ENCODE measurements at regions of chr20 and their contacts with region 1.

Region 1: GRCh38 chr20:45971675-45972499 is at the start of gene ZNF335:
- DNase-seq: peak; percentile 86
- ATAC-seq: peak; percentile 78
- H3K4me3 ChIP-seq: peak within 1 kb of the TSS; percentile 81
- H3K27ac ChIP-seq: peak within 1 kb of the TSS; percentile 97
- H3K4me1 ChIP-seq: peaks cover 5% of the 10 kb centered on the region
- H3K27me3 ChIP-seq: no peaks in the 10 kb centered on the region
- CTCF ChIP-seq: peak in 1 of 3 experiments; percentile 27; a peak in 1 of 6 replicates
- EP300 ChIP-seq: peak; percentile 13 to 58; a peak in 3 of 4 replicates
- POLR2A ChIP-seq: peak; percentile 88
- RAD21 ChIP-seq: no peak
- polyA plus RNA-seq, gene ZNF335: 0.74 to 1.2 TPM

Region 2: GRCh38 chr20:45798935-45799642 is 172.8 kb before region 1 on chr20:
- CTCF ChIA-PET with region 1: interaction called, 120 read pairs
- POLR2A ChIA-PET with region 1: interaction called, 5 read pairs
- RAD21 ChIA-PET with region 1: interaction called, 21 read pairs
- SMC1A ChIA-PET with region 1: interaction called, 17 read pairs
- in situ Hi-C with region 1: no loop called
- intact Hi-C with region 1: no loop called
- DNase-seq: no peak
- ATAC-seq: peak; percentile 99
- H3K4me3 ChIP-seq: no peak overlapping the region
- H3K27ac ChIP-seq: no peak overlapping the region
- H3K4me1 ChIP-seq: no peaks in the 10 kb centered on the region
- H3K27me3 ChIP-seq: no peaks in the 10 kb centered on the region
- CTCF ChIP-seq: peak; percentile 69 to 78 (median 73)
- EP300 ChIP-seq: no peak
- POLR2A ChIP-seq: no peak
- RAD21 ChIP-seq: peak; percentile 66

Region 3: GRCh38 chr20:45842169-45842812 is 129.6 kb before region 1 on chr20:
- CTCF ChIA-PET with region 1: interaction called, 18 read pairs
- POLR2A ChIA-PET with region 1: no interaction called
- RAD21 ChIA-PET with region 1: interaction called, 3 read pairs
- SMC1A ChIA-PET with region 1: no interaction called
- in situ Hi-C with region 1: no loop called
- intact Hi-C with region 1: no loop called
- DNase-seq: peak; percentile 33
- ATAC-seq: peak; percentile 98
- H3K4me3 ChIP-seq: no peak overlapping the region
- H3K27ac ChIP-seq: peak overlapping the region; percentile 63
- H3K4me1 ChIP-seq: peaks cover 14% of the 10 kb centered on the region
- H3K27me3 ChIP-seq: no peaks in the 10 kb centered on the region
- CTCF ChIP-seq: no peak
- EP300 ChIP-seq: no peak
- POLR2A ChIP-seq: no peak
- RAD21 ChIP-seq: no peak

Region 4: GRCh38 chr20:45910670-45911485 is 61.0 kb before region 1 on chr20:
- CTCF ChIA-PET with region 1: interaction called, 19 read pairs
- POLR2A ChIA-PET with region 1: interaction called, 3 read pairs
- RAD21 ChIA-PET with region 1: interaction called, 3 read pairs
- SMC1A ChIA-PET with region 1: interaction called, 8 read pairs
- in situ Hi-C with region 1: no loop called
- intact Hi-C with region 1: no loop called
- DNase-seq: peak; percentile 99
- ATAC-seq: peak; percentile 96
- H3K4me3 ChIP-seq: peak overlapping the region; percentile 77
- H3K27ac ChIP-seq: peak overlapping the region; percentile 61; the same call in 1 of the 2 replicates
- H3K4me1 ChIP-seq: peaks cover 15% of the 10 kb centered on the region
- H3K27me3 ChIP-seq: no peaks in the 10 kb centered on the region
- CTCF ChIP-seq: no peak
- EP300 ChIP-seq: no peak
- POLR2A ChIP-seq: peak; percentile 77
- RAD21 ChIP-seq: no peak

Region 5: GRCh38 chr20:45946149-45946970 is 25.5 kb before region 1 on chr20:
- CTCF ChIA-PET with region 1: interaction called, 33 read pairs
- POLR2A ChIA-PET with region 1: interaction called, 3 read pairs
- RAD21 ChIA-PET with region 1: interaction called, 3 read pairs
- SMC1A ChIA-PET with region 1: interaction called, 7 read pairs
- in situ Hi-C with region 1: no loop called
- intact Hi-C with region 1: no loop called
- DNase-seq: no peak
- ATAC-seq: peak; percentile 7; the same call in 2 of the 3 replicates
- H3K4me3 ChIP-seq: no peak overlapping the region
- H3K27ac ChIP-seq: no peak overlapping the region
- H3K4me1 ChIP-seq: peaks cover 3% of the 10 kb centered on the region; the same call in 1 of the 2 replicates
- H3K27me3 ChIP-seq: no peaks in the 10 kb centered on the region
- CTCF ChIP-seq: no peak
- EP300 ChIP-seq: no peak
- POLR2A ChIP-seq: peak; percentile 39
- RAD21 ChIP-seq: no peak

Region 6: GRCh38 chr20:46013826-46014516 is 42.1 kb after region 1 on chr20:
- CTCF ChIA-PET with region 1: interaction called, 61 read pairs
- POLR2A ChIA-PET with region 1: no interaction called
- RAD21 ChIA-PET with region 1: interaction called, 13 read pairs
- SMC1A ChIA-PET with region 1: interaction called, 8 read pairs
- in situ Hi-C with region 1: no loop called
- intact Hi-C with region 1: loop called (anchors 5 kb)
- DNase-seq: no peak
- ATAC-seq: peak; percentile 94
- H3K4me3 ChIP-seq: no peak overlapping the region
- H3K27ac ChIP-seq: no peak overlapping the region
- H3K4me1 ChIP-seq: peaks cover 10% of the 10 kb centered on the region
- H3K27me3 ChIP-seq: peaks cover 11 to 12% of the 10 kb centered on the region in 2 experiments; a peak in 3 of 4 replicates
- CTCF ChIP-seq: peak; percentile 60 to 83 (median 63)
- EP300 ChIP-seq: no peak
- POLR2A ChIP-seq: no peak
- RAD21 ChIP-seq: peak; percentile 51

Region 7: GRCh38 chr20:46126440-46127056 is 154.7 kb after region 1 on chr20:
- CTCF ChIA-PET with region 1: no interaction called
- POLR2A ChIA-PET with region 1: no interaction called
- RAD21 ChIA-PET with region 1: no interaction called
- SMC1A ChIA-PET with region 1: no interaction called
- in situ Hi-C with region 1: no loop called
- intact Hi-C with region 1: no loop called
- DNase-seq: no peak
- ATAC-seq: no peak
- H3K4me3 ChIP-seq: no peak overlapping the region
- H3K27ac ChIP-seq: no peak overlapping the region
- H3K4me1 ChIP-seq: peaks cover 21% of the 10 kb centered on the region
- H3K27me3 ChIP-seq: no peaks in the 10 kb centered on the region
- CTCF ChIP-seq: no peak
- EP300 ChIP-seq: no peak
- POLR2A ChIP-seq: 0 out of 2 replicates have a peak, but pooled peaks have one; percentile 36
- RAD21 ChIP-seq: no peak

Measured in GM12878 (cell line).